ENCODE measurements at regions of chr7 and their contacts with region 1.

Region 1: DNA sequence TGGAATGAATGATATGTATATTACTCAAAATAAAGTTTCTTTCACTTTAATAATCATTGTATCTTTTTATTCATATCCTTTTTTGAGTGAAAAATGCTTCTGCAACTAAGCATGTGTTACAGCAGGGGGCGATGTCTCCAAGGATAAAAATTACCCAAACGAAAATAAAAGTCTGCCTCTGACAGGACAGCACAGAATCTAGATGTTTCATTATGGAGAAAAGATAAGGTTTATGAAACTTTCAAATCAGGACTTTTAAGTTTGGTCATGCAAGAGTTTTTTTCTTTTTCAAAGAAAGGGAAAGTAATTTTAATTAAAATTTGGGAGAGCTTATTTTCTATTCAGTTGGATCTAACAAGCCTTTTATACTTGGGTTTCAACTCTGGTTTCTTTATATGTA is 48.4 kb downstream of the TES start:
- DNase-seq: peak; percentile 52 to 58
- H3K4me3 ChIP-seq: no peak overlapping the region
- H3K27ac ChIP-seq: peak overlapping the region; percentile 30; the same call in 1 of the 2 replicates
- H3K4me1 ChIP-seq: peaks cover 18% of the 10 kb centered on the region
- H3K27me3 ChIP-seq: no peaks in the 10 kb centered on the region
- CTCF ChIP-seq: peak; percentile 93

Region 2: GRCh38 chr7:116180302-116180701 is 78.4 kb before region 1 on chr7:
- CTCF ChIA-PET with region 1: no interaction called
- POLR2A ChIA-PET with region 1: no interaction called
- intact Hi-C with region 1: loop called (anchors 1 kb)
- DNase-seq: peak; percentile 25 to 49
- H3K4me3 ChIP-seq: no peak overlapping the region
- H3K27ac ChIP-seq: no peak overlapping the region
- H3K4me1 ChIP-seq: peaks cover 11% of the 10 kb centered on the region; the same call in 1 of the 2 replicates
- H3K27me3 ChIP-seq: no peaks in the 10 kb centered on the region
- CTCF ChIP-seq: peak; percentile 89

Region 3: GRCh38 chr7:116316833-116317612 is 58.3 kb after region 1 on chr7:
- CTCF ChIA-PET with region 1: no interaction called
- POLR2A ChIA-PET with region 1: no interaction called
- intact Hi-C with region 1: loop called (anchors 1 kb)
- DNase-seq: peak; percentile 76 to 97
- H3K4me3 ChIP-seq: peak overlapping the region; percentile 29; the same call in 1 of the 2 replicates
- H3K27ac ChIP-seq: peak overlapping the region; percentile 88
- H3K4me1 ChIP-seq: peaks cover 31% of the 10 kb centered on the region
- H3K27me3 ChIP-seq: no peaks in the 10 kb centered on the region
- CTCF ChIP-seq: no peak

Region 4: DNA sequence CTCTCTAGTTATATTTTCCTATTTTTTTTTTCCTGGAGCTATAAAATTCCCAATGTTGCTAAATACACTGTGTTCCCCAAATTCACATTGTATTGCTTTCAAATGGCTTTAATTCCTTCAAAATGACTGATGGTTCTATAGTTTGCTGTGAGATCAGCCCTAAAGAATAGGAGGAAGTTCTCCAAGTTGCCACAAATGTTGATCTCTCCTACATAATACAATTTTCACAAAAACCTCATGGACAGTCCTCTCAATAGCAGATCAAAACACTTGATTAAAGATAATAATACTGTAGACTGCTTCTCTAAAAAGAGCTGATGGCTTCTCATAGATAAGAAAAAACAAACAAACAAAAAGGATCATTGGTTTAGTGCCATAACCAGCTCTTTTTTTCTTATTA is 143.0 kb after region 1 on chr7:
- CTCF ChIA-PET with region 1: interaction called, 3 read pairs
- POLR2A ChIA-PET with region 1: interaction called, 20 read pairs
- intact Hi-C with region 1: loop called (anchors 1 kb)
- DNase-seq: no peak
- H3K4me3 ChIP-seq: no peak overlapping the region
- H3K27ac ChIP-seq: no peak overlapping the region
- H3K4me1 ChIP-seq: peaks cover 10% of the 10 kb centered on the region
- H3K27me3 ChIP-seq: no peaks in the 10 kb centered on the region
- CTCF ChIP-seq: no peak

Region 5: GRCh38 chr7:116455009-116455408 is 196.3 kb after region 1 on chr7:
- CTCF ChIA-PET with region 1: interaction called, 10 read pairs
- POLR2A ChIA-PET with region 1: interaction called, 4 read pairs
- intact Hi-C with region 1: no loop called
- DNase-seq: no peak
- H3K4me3 ChIP-seq: no peak overlapping the region
- H3K27ac ChIP-seq: no peak overlapping the region
- H3K4me1 ChIP-seq: 0 out of 2 replicates have a peak, but pooled peaks cover 4% of the 10 kb centered on the region
- H3K27me3 ChIP-seq: no peaks in the 10 kb centered on the region
- CTCF ChIP-seq: no peak

Region 6: DNA sequence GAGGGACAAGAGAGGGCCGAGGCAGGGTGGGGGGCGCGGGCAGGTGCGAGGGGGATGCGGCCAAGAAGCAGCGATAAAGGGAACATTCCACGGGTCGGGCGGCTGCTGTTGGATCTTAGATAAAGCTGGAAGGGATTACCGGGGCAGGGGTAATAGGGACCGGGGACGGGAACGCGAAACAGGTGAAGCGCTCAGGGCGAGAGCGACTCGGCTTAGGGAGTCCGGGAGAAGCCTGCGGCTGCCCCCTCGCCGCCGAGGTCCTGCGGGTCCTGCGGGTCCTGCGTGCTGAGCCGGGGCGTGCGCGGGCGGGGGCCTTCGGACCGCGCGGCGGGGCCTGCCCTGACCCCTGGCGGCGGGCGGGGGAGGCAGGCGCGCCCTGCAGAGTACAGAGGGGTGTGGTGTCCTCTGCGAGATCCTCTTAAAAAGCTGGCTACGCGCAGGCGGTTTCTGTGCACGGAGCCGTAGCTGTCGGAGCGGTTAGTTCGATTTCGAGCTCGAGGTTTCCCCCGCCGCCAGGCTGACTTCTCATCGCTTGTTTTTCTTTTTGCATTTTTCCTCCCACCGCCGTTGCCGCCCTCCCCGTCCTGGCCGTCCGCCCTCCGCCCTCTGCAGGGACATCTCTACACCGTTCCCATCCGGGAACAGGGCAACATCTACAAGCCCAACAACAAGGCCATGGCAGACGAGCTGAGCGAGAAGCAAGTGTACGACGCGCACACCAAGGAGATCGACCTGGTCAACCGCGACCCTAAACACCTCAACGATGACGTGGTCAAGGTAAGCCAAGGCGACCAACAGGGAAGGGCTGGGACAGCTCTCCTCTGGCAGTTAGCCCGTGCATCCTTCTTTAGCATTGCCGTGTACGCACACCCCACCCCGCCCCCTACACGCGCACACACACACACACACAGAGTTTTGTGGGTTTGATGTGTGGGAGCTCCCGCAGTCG is 267.5 kb after region 1 on chr7:
- CTCF ChIA-PET with region 1: interaction called, 19 read pairs
- POLR2A ChIA-PET with region 1: interaction called, 16 read pairs
- intact Hi-C with region 1: loop called (anchors 1 kb)
- DNase-seq: peak; percentile 63 to 90
- H3K4me3 ChIP-seq: peak overlapping the region; percentile 97
- H3K27ac ChIP-seq: peak overlapping the region; percentile 92
- H3K4me1 ChIP-seq: peaks cover 64% of the 10 kb centered on the region
- H3K27me3 ChIP-seq: no peaks in the 10 kb centered on the region
- CTCF ChIP-seq: peak; percentile 56

Region 7: GRCh38 chr7:116671681-116672595 is 413.2 kb after region 1 on chr7 and contains the start of gene MET:
- CTCF ChIA-PET with region 1: no interaction called
- POLR2A ChIA-PET with region 1: no interaction called
- intact Hi-C with region 1: loop called (anchors 1 kb)
- DNase-seq: peak; percentile 82 to 98
- H3K4me3 ChIP-seq: peak within 1 kb of the TSS; percentile 98
- H3K27ac ChIP-seq: peak within 1 kb of the TSS; percentile 90
- H3K4me1 ChIP-seq: peaks cover 40% of the 10 kb centered on the region
- H3K27me3 ChIP-seq: no peaks in the 10 kb centered on the region
- CTCF ChIP-seq: peak; percentile 76
- total RNA-seq, gene MET: 237 and 287 TPM in 2 replicates